WTC11 (cell line): ENCODE measurements at regions of chr2 and their contacts with region 1.

Region 1: DNA sequence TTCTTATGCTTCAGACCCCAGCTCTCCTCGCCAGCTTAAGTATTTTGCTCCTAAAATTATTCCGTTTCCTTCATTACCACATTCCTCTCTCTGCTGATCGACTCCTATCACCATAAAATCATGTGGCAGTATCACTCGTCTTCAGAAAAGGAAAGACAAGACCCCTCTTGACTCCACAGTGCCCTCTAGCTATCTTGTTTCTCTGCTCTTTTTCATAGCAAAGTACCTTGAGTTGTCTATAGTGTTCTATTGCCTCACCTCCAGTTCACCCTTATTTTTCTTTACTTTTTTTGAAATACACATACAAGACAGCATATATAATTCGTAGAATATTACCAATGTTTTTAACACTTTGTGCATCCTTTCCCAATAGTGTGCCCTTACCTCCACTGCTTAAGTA is 273.2 kb upstream of the SIX3 start:
- DNase-seq: no peak
- ATAC-seq: peak; percentile 92
- H3K4me3 Mint-ChIP-seq: no peak overlapping the region
- H3K27ac Mint-ChIP-seq: no peak overlapping the region
- H3K4me1 Mint-ChIP-seq: peaks cover 21% of the 10 kb centered on the region
- H3K27me3 Mint-ChIP-seq: no peaks in the 10 kb centered on the region; the same call in 1 of the 2 replicates
- CTCF ChIP-seq: no peak

Region 2: GRCh38 chr2:44450806-44451205 is 217.5 kb before region 1 on chr2:
- CTCF ChIA-PET with region 1: no interaction called
- POLR2A ChIA-PET with region 1: no interaction called
- DNase-seq: no peak
- ATAC-seq: no peak
- H3K4me3 Mint-ChIP-seq: no peak overlapping the region
- H3K27ac Mint-ChIP-seq: no peak overlapping the region
- H3K4me1 Mint-ChIP-seq: peaks cover 38% of the 10 kb centered on the region
- H3K27me3 Mint-ChIP-seq: no peaks in the 10 kb centered on the region
- CTCF ChIP-seq: no peak

Region 3: GRCh38 chr2:44655401-44655864 is 12.9 kb before region 1 on chr2:
- CTCF ChIA-PET with region 1: interaction called, 11 read pairs
- POLR2A ChIA-PET with region 1: no interaction called
- DNase-seq: no peak
- ATAC-seq: no peak
- H3K4me3 Mint-ChIP-seq: no peak overlapping the region
- H3K27ac Mint-ChIP-seq: no peak overlapping the region
- H3K4me1 Mint-ChIP-seq: peaks cover 42% of the 10 kb centered on the region
- H3K27me3 Mint-ChIP-seq: no peaks in the 10 kb centered on the region
- CTCF ChIP-seq: no peak

Region 4: GRCh38 chr2:44707945-44708660 is 39.8 kb after region 1 on chr2:
- CTCF ChIA-PET with region 1: interaction called, 13 read pairs
- POLR2A ChIA-PET with region 1: no interaction called
- DNase-seq: no peak
- ATAC-seq: peak; percentile 34; the same call in 1 of the 2 replicates
- H3K4me3 Mint-ChIP-seq: 0 out of 2 replicates have a peak overlapping the region, but pooled peaks have one; percentile 1
- H3K27ac Mint-ChIP-seq: no peak overlapping the region
- H3K4me1 Mint-ChIP-seq: peaks cover 48% of the 10 kb centered on the region
- H3K27me3 Mint-ChIP-seq: no peaks in the 10 kb centered on the region
- CTCF ChIP-seq: no peak